T-cell (primary cell): ENCODE measurements at regions of chr14 and their contacts with region 1.

Region 1: DNA sequence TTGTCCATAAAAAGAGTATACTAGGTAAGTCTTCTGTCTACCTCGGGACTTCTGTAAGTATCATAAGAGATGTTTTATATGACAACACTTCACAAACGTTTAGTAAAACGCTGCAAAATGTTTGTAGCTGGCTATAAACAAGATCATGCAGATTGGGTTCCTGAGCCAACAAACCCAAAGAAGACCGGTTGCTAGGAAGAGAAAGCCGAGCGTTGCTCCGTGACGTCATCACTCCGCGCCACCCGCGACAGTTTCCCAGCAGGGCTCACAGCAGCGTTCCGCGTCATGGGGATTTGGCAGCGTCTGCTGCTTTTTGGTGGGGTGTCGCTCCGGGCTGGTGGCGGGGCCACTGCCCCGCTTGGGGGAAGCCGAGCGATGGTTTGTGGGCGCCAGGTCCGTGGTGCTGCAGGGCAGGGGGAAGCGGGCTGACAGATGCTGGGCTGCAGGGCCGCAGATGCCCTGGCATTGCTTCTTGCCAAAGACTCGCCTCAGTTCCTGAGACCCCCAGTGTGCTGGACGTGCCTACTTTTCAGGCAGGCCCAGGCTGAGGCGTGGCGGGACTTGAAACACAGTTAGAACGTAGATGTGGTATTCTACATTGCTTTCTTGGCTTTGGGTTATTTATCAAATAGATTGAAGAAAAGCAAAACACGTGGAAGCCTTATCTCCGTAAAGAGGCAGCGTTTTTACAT is at the start of gene NUBPL:
- DNase-seq: peak; percentile 93 to 100 (median 97)
- ATAC-seq: peak; percentile 92 to 94 (median 93)
- H3K4me3 ChIP-seq: peak within 1 kb of the TSS; percentile 95
- H3K4me3 Mint-ChIP-seq: peak within 1 kb of the TSS; percentile 94 to 95 (median 95)
- H3K27ac ChIP-seq: peak within 1 kb of the TSS; percentile 71
- H3K27ac Mint-ChIP-seq: peak within 1 kb of the TSS; percentile 92 to 96
- H3K4me1 ChIP-seq: peaks cover 0 to 5% of the 10 kb centered on the region in 2 experiments
- H3K4me1 Mint-ChIP-seq: peaks cover 26 to 37% (median 33%) of the 10 kb centered on the region in 3 donors
- H3K27me3 ChIP-seq: no peaks in the 10 kb centered on the region
- H3K27me3 Mint-ChIP-seq: peaks cover 0 to 7% of the 10 kb centered on the region in 2 donors
- total RNA-seq, gene NUBPL: 6.8 to 11.0 (median 10.2) TPM

Region 2: DNA sequence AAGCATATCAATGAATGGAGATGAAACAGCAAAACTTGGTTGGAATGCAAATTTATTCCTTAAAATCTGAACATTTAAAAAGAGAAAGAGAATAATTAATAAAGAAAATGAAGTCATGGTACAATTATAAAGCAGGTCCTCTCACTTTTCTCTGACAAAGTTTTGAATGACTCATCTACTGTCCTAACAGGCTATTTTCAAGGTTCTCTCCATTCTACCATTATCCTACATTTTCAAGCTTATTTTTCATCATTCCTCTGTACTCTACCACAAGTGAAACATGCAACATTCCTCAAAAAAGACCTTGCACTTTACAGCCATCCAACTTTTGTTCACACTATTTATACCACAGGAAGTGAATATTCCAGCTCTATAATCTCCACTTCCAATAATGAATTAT is 572.8 kb before region 1 on chr14:
- CTCF ChIA-PET with region 1: no interaction called
- POLR2A ChIA-PET with region 1: interaction called in 1 of 2 experiments, 14 read pairs
- DNase-seq: no peak
- ATAC-seq: no peak
- H3K4me3 ChIP-seq: no peak overlapping the region
- H3K4me3 Mint-ChIP-seq: no peak overlapping the region
- H3K27ac ChIP-seq: no peak overlapping the region
- H3K27ac Mint-ChIP-seq: peak overlapping the region in 1 of 2 donors; percentile 52
- H3K4me1 ChIP-seq: peaks cover 0 to 4% of the 10 kb centered on the region in 2 experiments
- H3K4me1 Mint-ChIP-seq: peaks cover 40 to 46% (median 41%) of the 10 kb centered on the region in 3 donors
- H3K27me3 ChIP-seq: no peaks in the 10 kb centered on the region
- H3K27me3 Mint-ChIP-seq: no peaks in the 10 kb centered on the region

Region 3: GRCh38 chr14:31297701-31298344 is 263.5 kb before region 1 on chr14:
- CTCF ChIA-PET with region 1: interaction called in 1 of 2 experiments, 11 read pairs
- POLR2A ChIA-PET with region 1: no interaction called
- DNase-seq: no peak
- ATAC-seq: no peak
- H3K4me3 ChIP-seq: no peak overlapping the region
- H3K4me3 Mint-ChIP-seq: no peak overlapping the region
- H3K27ac ChIP-seq: no peak overlapping the region
- H3K27ac Mint-ChIP-seq: no peak overlapping the region
- H3K4me1 ChIP-seq: no peaks in the 10 kb centered on the region
- H3K4me1 Mint-ChIP-seq: no peaks in the 10 kb centered on the region
- H3K27me3 ChIP-seq: no peaks in the 10 kb centered on the region
- H3K27me3 Mint-ChIP-seq: no peaks in the 10 kb centered on the region

Region 4: DNA sequence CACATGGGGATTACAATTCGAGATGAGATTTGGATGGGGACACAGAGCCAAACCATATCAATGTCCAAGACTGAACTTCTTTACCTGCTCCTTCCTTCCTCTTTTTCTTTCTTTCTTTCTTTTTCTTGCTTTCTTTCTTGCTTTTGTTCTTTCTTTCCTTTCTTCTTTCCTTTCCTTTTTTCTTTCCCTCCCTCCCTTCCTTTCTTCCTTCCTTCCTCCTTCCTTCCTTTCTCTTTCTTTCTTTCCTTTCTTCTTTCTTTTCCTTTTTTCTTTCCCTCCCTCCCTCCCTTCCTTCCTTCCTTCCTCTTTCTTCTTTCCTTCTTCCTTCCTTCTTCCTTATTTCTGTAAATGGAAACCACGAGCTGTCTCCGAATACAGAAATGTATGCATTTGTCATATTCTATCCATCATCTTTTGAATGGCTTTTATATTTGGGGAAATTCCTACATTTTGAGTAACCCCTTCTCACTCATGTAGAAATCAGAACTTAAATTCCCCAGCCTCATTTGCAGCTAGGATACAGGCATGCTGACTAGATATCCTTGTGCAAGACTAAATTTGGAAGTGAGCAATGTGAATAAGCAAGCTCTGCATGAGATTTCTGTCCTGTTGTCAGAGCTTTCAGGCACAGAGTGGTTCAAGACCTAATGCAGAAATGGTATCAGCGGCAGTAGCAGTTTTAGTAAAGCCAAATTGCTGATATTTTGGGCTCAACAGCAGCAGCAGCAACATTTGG is 85.0 kb before region 1 on chr14:
- CTCF ChIA-PET with region 1: no interaction called
- POLR2A ChIA-PET with region 1: no interaction called
- DNase-seq: no peak
- ATAC-seq: no peak
- H3K4me3 ChIP-seq: no peak overlapping the region
- H3K4me3 Mint-ChIP-seq: no peak overlapping the region
- H3K27ac ChIP-seq: no peak overlapping the region
- H3K27ac Mint-ChIP-seq: no peak overlapping the region
- H3K4me1 ChIP-seq: no peaks in the 10 kb centered on the region
- H3K4me1 Mint-ChIP-seq: no peaks in the 10 kb centered on the region
- H3K27me3 ChIP-seq: peaks cover 0 to 5% of the 10 kb centered on the region in 2 experiments
- H3K27me3 Mint-ChIP-seq: peaks cover 16 to 18% of the 10 kb centered on the region in 2 donors

Region 5: DNA sequence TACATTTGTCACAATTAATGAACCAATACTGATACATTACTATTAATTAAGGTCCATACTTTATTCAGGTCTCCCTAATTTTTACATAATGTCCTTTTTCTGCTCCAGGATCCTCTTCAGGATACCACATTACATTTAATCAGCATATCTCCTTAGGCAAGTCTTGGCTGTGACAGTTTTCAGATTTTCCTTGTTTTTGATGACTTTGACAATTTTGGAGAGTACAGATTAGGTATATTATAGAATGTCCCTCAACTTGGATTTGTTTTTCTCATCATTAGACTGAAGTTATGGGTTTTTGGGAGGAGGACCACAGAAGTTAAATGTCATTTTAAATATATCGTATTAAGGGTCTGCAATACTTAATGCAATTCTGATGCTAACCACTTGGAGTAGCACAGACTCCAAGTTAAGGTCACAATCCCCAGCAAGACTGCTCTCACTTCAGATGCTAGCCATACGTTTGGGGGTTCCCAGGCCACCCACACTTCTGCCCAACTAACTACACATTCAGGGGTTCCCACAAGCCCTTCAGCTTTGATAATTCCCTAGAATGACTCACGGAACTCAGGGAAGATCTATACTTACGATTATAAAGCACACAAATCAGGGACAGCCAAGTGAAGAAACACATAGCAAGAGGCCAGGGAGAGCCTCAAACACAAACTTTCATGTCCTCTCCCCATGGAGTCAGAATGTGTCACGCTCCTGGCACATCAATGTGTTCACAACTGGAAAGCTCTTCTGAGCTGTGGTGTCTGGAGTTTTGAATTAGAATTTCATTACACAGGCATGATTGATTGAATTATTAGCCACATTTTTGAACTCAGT is 17.1 kb before region 1 on chr14:
- CTCF ChIA-PET with region 1: interaction called in 1 of 2 experiments, 3 read pairs
- POLR2A ChIA-PET with region 1: interaction called in 1 of 2 experiments, 13 read pairs
- DNase-seq: peak in 1 of 35 experiments; percentile 17
- ATAC-seq: no peak
- H3K4me3 ChIP-seq: no peak overlapping the region
- H3K4me3 Mint-ChIP-seq: no peak overlapping the region
- H3K27ac ChIP-seq: no peak overlapping the region
- H3K27ac Mint-ChIP-seq: no peak overlapping the region
- H3K4me1 ChIP-seq: no peaks in the 10 kb centered on the region
- H3K4me1 Mint-ChIP-seq: no peaks in the 10 kb centered on the region
- H3K27me3 ChIP-seq: peaks cover 0 to 4% of the 10 kb centered on the region in 2 experiments
- H3K27me3 Mint-ChIP-seq: peaks cover 19 to 25% of the 10 kb centered on the region in 2 donors

Region 6: DNA sequence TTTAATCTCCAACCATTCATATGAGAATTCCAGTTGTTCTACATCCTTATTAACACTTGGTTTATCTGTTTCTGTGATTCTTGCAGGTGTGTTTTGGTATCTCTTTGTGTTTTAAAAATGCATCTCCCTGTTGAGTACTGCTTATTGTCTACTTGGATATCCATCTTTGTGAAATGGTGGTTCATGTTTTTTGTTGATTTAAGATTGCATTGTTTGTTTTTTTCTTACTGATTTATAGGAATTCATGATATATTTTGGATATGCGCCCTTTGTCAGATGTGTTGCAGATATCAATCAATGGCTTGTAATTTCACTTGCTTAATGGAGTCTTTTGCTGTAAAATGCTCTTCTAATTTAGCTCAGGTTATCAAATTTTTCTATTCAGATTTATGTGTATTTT is 175.5 kb after region 1 on chr14:
- CTCF ChIA-PET with region 1: no interaction called
- POLR2A ChIA-PET with region 1: no interaction called
- DNase-seq: no peak
- ATAC-seq: no peak
- H3K4me3 ChIP-seq: no peak overlapping the region
- H3K4me3 Mint-ChIP-seq: no peak overlapping the region
- H3K27ac ChIP-seq: no peak overlapping the region
- H3K27ac Mint-ChIP-seq: no peak overlapping the region
- H3K4me1 ChIP-seq: no peaks in the 10 kb centered on the region
- H3K4me1 Mint-ChIP-seq: no peaks in the 10 kb centered on the region
- H3K27me3 ChIP-seq: no peaks in the 10 kb centered on the region
- H3K27me3 Mint-ChIP-seq: no peaks in the 10 kb centered on the region